IMR-90 (cell line): ENCODE measurements at regions of chr10 and their contacts with region 1.

Region 1: GRCh38 chr10:35153716-35154479 is 27.3 kb downstream of the CREM start:
- DNase-seq: no peak
- ATAC-seq: no peak
- H3K4me3 ChIP-seq: no peak overlapping the region
- H3K27ac ChIP-seq: no peak overlapping the region
- H3K4me1 ChIP-seq: no peaks in the 10 kb centered on the region
- H3K27me3 ChIP-seq: no peaks in the 10 kb centered on the region
- CTCF ChIP-seq: no peak
- POLR2A ChIP-seq: no peak
- RAD21 ChIP-seq: no peak

Region 2: GRCh38 chr10:36738738-36739431 is 1585.0 kb after region 1 on chr10:
- CTCF ChIA-PET with region 1: no interaction called
- POLR2A ChIA-PET with region 1: interaction called, 29 read pairs
- dilution Hi-C with region 1: no loop called
- in situ Hi-C with region 1: no loop called
- intact Hi-C with region 1: no loop called
- DNase-seq: no peak
- ATAC-seq: no peak; the same call in 1 of the 2 replicates
- H3K4me3 ChIP-seq: no peak overlapping the region
- H3K27ac ChIP-seq: no peak overlapping the region
- H3K4me1 ChIP-seq: no peaks in the 10 kb centered on the region
- H3K27me3 ChIP-seq: no peaks in the 10 kb centered on the region
- CTCF ChIP-seq: no peak
- POLR2A ChIP-seq: no peak
- RAD21 ChIP-seq: no peak